ENCODE measurements at regions of chr1 and their contacts with region 1.

Region 1: GRCh38 chr1:23772049-23772853 is 6.0 kb upstream of the PITHD1 start:
- DNase-seq: peak; percentile 77
- CTCF ChIP-seq: peak; percentile 96

Region 2: GRCh38 chr1:23484253-23485001 is 287.8 kb before region 1 on chr1:
- CTCF ChIA-PET with region 1: no interaction called
- POLR2A ChIA-PET with region 1: no interaction called
- DNase-seq: peak; percentile 92
- CTCF ChIP-seq: no peak

Region 3: DNA sequence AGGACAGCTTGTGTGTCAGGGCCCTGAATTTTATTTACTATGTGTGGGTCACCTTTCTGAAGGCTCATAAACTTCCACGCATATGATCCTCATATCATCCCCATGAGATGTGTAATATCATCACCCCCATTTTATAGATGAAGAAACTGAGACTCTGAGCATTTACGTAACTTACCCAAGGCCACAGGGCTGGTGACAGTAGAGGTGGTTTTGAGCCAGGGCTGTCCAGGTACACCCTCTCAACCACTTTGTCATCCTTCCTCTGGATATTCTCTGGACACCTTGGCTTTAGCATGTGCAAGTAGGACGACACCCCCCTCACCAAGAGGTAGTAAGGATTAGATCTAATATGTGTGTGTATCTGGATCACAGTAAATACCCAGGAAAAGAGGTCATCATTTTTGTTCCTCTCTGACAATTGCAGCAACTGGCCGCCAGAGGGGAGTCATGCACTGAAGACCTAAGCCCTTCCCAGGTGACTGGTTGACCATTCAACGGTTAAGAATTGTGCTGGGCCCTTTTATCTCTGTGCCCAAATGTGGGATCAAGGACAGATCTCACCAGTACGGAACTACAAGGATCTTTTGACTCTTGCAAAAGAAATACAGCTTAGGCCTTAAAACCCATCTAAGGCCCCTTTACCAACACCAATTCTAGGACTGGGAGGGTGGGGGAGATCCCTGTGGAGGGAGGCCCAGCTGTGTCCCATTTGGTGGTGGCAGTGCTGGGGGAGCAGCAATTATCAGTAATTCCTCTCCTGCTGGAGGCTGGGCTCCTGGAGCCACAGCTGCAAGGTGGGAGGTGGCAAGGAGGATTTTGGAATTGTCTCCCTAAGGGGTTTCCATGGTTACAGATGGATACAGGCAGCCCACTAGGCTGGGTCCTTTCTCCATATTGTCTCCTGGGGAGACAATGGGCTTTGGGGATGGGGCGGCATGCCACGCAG is 227.5 kb before region 1 on chr1:
- CTCF ChIA-PET with region 1: no interaction called
- POLR2A ChIA-PET with region 1: no interaction called
- DNase-seq: peak; percentile 71
- CTCF ChIP-seq: peak; percentile 81

Region 4: DNA sequence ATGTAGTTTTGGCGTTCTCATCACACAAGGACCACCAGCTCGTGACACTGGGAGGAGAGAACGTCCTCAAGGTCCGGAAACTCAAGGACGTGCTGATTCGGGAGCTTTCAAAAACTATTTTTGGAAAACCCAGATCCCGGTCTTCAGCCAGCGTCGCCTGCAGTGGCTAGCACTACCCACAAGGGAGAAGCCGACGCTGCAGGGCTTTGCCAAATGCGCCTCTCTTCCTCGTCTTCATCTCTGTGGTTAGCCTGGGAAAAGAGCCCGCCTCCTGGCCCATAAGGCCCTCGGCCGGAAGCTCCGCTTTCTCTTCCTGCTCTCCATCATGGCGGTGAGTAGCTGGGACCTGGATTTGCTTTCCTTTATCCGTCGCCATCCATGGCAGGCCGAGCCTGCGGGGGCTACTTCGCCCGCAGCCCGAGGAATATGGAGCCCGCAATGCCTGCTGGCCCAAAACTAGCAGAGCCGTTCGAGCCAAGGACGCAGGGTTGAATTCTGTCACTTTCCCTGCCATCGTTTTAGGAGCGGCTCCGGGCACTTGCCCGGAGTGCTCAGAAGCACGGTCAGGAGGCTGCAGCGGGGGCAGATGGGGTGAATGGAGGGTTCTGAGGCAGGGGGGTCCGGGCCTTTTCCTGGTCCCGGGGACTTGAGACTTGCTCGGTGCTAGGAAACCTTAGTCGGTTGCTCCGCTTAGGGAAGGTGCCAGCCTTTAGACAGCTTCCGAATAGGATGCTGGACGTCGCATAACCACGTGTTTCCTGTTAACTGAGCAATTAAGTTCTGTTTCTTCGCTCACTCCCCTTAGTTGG is 80.5 kb before region 1 on chr1 and contains the start of gene RPL11:
- CTCF ChIA-PET with region 1: interaction called, 13 read pairs
- POLR2A ChIA-PET with region 1: no interaction called
- DNase-seq: peak; percentile 95
- CTCF ChIP-seq: peak; percentile 60

Region 5: DNA sequence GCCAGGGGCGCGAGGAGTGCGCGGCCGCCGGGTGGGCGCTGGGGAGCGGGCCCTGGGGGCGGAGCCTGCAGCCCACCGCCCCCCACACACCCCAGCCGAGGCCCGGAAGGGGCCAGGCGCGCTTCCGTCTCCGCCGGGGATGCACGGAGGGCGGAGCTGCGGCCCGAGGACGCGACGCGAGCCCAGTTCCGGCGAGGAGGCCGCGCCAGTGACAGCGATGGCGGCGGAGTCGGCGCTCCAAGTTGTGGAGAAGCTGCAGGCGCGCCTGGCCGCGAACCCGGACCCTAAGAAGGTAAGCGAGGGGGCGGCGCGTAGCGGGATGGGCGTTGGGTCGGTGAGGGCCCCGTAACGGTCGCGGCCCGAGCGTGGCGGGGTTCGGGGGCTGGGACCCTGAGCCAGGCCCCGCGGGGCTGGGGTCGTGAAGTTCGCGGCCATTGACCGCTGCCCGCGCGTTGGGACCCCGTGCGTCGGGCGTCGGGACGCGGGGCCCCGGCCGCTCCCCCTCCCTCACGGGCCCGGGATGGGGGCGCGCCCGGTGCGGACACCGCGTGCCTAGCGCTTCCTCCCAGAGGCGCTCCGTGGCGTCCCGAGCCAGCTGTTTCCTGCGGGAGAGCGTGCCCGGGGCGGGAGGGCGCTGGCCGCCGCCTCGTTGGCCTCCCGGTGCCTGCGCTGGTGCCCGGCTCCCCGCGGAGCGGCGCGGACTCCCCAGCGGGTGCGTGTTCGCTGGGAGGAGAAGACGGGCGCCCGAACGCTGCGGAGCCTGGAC is 28.8 kb before region 1 on chr1 and contains the start of gene ELOA:
- CTCF ChIA-PET with region 1: interaction called, 25 read pairs
- POLR2A ChIA-PET with region 1: interaction called, 6 read pairs
- DNase-seq: peak; percentile 92
- CTCF ChIP-seq: no peak

Region 6: DNA sequence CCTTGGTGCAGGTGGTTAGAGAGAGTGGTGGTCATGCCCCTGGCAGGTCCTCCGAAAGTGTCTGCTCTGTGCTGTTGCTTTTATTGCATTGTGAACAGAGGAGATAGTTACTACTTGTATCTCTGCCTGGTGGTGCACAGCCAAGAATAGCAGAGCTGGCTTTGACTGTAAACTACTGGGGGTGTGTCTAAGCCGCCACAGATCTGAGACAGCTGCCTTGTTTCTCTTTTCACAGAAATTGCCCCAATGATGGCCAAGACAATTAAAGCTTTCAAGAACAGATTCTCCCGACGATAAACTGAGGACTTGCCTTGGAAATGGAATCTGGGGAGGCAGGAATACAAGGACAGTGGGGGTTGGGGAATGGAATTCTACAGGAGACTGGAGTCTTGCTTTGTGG is 13.0 kb before region 1 on chr1:
- CTCF ChIA-PET with region 1: interaction called, 18 read pairs
- POLR2A ChIA-PET with region 1: no interaction called
- DNase-seq: no peak
- CTCF ChIP-seq: no peak

Region 7: DNA sequence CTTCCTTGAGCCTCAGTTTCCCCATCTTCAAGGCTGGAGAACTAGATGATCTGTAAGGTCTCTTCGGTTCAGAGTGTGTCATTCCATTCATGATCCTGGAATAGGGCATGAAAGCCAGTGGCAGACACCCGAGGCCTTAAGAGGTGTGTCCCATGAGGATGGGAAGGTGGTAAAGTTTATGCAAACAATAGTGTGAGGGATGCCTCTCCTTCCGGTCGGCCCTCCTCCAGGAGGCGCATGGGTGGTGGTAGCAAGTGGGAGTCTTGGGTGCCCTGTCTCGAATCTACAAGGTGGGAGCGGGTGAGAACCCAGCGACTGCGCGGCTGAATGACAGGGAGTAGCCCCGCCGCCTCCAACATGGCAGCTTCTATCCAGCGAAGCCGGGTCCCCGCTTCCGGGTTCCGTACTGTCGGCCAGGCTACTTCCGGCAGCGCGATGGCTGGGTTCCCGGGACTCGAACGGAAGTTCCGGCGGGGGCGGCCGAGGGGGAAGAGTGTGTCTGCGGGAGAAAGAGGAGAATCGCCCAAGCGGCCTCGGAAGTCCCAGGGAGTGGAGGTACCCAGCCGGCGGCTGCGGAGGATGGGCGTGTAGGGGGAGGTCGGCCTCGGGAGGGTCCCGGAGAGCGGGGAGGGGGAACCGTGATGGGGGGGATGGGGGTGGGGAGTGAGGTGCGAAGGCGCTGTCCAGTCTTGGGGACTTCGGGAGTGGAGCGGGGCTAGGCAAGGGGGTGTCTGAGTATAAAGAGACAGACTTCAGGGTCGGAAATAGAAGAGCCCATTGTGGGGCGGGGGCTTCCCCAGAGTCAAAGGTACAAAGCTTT is 18.7 kb after region 1 on chr1 and contains the start of gene LYPLA2:
- CTCF ChIA-PET with region 1: interaction called, 11 read pairs
- POLR2A ChIA-PET with region 1: no interaction called
- DNase-seq: peak; percentile 91
- CTCF ChIP-seq: no peak

Region 8: DNA sequence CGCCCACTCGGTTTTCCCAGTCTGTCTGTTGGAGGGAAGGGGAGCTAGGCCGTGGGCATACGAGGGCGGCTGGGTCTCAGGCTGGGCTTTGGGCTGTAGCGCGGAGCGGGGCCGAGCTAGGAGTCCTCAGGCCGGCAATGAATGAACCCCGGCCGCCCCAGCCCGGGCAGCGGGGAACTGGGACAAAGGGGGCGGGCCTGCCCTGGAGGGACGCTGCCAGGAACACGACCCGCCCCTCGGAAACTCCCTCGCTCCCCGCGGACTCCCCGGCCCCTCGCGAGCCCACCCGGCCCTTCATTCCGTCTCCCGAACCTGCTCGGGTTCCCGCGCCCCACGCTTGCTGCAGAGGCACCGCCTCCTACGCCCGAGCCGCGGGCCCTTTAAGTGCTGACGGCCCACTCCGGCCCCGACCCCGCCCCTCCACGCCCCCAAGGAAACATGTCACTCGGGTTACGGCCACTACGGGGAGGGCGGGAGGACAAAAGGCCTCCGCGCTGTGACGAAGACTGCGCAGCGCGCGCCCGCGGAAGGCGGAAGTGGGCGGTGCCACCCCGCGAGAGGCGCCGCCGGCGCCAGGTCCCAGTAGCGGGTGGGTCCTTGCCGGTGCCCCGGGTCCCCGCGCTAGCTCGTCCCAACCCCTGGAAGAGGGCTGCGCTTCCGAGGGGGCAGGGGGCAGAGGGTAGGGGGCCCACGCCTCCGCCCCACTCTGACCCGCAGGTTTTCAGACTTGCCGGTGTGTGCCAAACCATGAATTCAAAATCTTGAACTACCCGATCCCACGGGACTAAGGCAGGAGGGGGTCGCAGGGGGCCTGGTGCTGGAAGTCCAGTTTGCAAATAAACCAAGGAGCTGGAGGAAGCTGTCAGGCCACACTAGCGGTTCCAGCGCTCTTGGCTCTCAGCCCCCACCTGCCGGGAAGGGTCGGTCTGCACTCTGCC is 28.4 kb after region 1 on chr1 and contains the start of gene GALE:
- CTCF ChIA-PET with region 1: interaction called, 13 read pairs
- POLR2A ChIA-PET with region 1: no interaction called
- DNase-seq: peak; percentile 99
- CTCF ChIP-seq: no peak

Measured in GM10248 (cell line).